ENCODE measurements at regions of chr6 and their contacts with region 1.

Region 1: DNA sequence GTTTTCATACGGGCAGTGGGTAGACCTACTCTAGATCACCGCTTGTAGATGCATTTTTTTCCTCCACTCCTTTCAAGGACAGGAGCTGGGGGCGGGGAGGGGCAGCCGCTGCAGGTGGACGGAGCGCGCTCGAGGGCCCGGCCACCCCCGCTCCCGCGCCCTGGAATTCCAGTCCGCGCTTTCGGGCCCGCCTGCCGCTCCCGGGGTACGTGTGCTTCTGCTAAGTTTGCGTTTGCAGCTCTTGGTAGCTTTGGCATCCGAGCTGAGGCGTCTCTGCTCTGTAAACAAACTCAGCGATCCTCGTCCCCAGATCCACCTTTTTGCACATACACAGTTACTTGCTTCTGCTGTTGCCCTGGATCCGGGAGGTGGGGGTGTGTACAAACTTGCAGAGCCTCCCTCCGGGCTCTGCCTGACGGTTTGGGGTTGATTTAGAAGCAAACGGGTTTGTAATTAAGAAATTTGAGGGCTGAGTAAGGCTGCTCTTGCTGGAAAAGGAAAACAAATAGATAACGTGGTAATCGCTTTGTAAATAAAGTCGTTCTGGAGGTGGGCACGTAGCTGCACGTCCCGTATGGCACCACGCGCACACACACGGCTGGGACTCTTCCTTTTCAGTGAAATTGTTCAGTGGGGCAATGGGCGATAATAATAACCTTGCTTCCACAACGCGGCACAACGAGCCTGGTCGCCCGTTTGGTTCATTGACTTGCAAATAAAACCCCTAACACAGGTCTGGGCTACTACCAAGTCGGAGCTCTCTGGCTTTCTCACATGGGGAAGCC is 976 bp upstream of the CITED2 start:
- DNase-seq: peak; percentile 88 to 96 (median 89)
- ATAC-seq: peak; percentile 74
- H3K4me3 ChIP-seq: peak overlapping the region; percentile 83
- H3K27ac ChIP-seq: peak overlapping the region; percentile 97
- H3K4me1 ChIP-seq: peaks cover 43 to 45% of the 10 kb centered on the region in 2 experiments
- H3K27me3 ChIP-seq: no peaks in the 10 kb centered on the region
- CTCF ChIP-seq: peak in 1 of 3 experiments; percentile 47; a peak in 1 of 6 replicates
- EP300 ChIP-seq: peak; percentile 51
- POLR2A ChIP-seq: peak; percentile 78
- RAD21 ChIP-seq: peak; percentile 65 to 72

Region 2: GRCh38 chr6:138638604-138639003 is 736.8 kb before region 1 on chr6:
- CTCF ChIA-PET with region 1: no interaction called
- POLR2A ChIA-PET with region 1: no interaction called
- in situ Hi-C with region 1: no loop called
- intact Hi-C with region 1: no loop called
- DNase-seq: no peak
- ATAC-seq: no peak
- H3K4me3 ChIP-seq: no peak overlapping the region
- H3K27ac ChIP-seq: no peak overlapping the region
- H3K4me1 ChIP-seq: no peaks in the 10 kb centered on the region
- H3K27me3 ChIP-seq: no peaks in the 10 kb centered on the region
- CTCF ChIP-seq: no peak
- EP300 ChIP-seq: no peak
- POLR2A ChIP-seq: no peak
- RAD21 ChIP-seq: no peak

Region 3: DNA sequence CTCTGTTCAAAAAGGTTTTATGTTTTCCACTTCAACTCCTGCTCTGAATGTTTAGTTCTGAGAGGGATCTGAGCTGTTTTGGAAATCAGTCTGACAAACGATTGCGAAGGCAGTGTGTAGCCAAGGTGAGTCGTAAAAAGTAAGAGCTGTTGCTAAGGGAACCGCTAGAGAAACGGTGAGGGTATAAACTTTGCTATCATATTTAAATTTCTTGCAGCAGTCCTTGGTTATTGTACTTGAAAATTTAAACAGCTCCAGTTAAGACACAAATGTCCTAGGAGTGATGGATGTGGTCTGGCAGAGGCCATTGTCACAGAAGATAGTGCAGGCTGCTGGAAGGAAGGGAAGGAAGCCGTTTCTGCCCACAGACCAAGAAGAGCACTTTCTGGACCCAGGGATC is 63.9 kb after region 1 on chr6:
- CTCF ChIA-PET with region 1: no interaction called
- POLR2A ChIA-PET with region 1: interaction called, 11 read pairs
- in situ Hi-C with region 1: no loop called
- intact Hi-C with region 1: no loop called
- DNase-seq: no peak
- ATAC-seq: peak; percentile 28; the same call in 2 of the 3 replicates
- H3K4me3 ChIP-seq: no peak overlapping the region
- H3K27ac ChIP-seq: no peak overlapping the region
- H3K4me1 ChIP-seq: peaks cover 15 to 36% of the 10 kb centered on the region in 2 experiments
- H3K27me3 ChIP-seq: no peaks in the 10 kb centered on the region
- CTCF ChIP-seq: no peak
- EP300 ChIP-seq: peak; percentile 12; the same call in 1 of the 2 replicates
- POLR2A ChIP-seq: no peak
- RAD21 ChIP-seq: no peak

Region 4: DNA sequence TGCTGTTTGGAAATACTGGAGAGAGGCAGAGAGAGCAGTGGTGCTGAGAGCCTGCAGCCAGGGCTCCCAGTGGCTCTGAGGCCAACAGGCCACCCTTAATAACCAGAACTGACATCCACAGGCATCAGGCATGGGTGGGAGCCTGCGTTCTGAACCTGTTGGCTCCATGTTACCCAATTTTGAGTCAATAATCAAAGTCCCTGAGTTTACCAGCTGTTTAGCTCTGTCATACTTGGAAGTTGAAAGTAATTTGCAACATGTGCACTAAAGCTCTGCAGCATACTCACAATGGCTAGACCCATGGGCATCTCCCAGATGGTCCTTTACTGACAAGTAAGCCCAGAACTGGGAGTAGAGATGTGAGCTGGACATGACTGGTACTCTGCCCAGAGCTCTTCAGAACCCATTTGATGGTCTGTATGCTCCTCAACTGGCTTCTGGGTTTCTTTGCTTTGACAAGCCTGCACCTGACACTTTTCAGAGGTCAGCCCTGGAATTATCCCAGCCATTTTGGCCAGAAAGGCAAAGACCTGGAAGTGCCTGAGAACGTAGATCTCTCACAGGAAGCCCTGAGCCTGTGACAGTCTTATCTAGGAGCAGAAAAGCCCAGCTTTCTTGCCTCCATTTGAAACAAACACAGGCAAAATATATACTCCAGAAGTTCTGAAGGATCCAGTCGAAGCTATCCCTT is 121.4 kb after region 1 on chr6:
- CTCF ChIA-PET with region 1: no interaction called
- POLR2A ChIA-PET with region 1: interaction called, 17 read pairs
- in situ Hi-C with region 1: no loop called
- intact Hi-C with region 1: loop called (anchors 2 kb)
- DNase-seq: peak in 2 of 4 experiments; percentile 46 to 70
- ATAC-seq: peak; percentile 75
- H3K4me3 ChIP-seq: peak overlapping the region; percentile 4; the same call in 1 of the 2 replicates
- H3K27ac ChIP-seq: peak overlapping the region; percentile 57
- H3K4me1 ChIP-seq: peaks cover 19 to 22% of the 10 kb centered on the region in 2 experiments
- H3K27me3 ChIP-seq: no peaks in the 10 kb centered on the region
- CTCF ChIP-seq: no peak
- EP300 ChIP-seq: no peak
- POLR2A ChIP-seq: no peak
- RAD21 ChIP-seq: no peak

Region 5: DNA sequence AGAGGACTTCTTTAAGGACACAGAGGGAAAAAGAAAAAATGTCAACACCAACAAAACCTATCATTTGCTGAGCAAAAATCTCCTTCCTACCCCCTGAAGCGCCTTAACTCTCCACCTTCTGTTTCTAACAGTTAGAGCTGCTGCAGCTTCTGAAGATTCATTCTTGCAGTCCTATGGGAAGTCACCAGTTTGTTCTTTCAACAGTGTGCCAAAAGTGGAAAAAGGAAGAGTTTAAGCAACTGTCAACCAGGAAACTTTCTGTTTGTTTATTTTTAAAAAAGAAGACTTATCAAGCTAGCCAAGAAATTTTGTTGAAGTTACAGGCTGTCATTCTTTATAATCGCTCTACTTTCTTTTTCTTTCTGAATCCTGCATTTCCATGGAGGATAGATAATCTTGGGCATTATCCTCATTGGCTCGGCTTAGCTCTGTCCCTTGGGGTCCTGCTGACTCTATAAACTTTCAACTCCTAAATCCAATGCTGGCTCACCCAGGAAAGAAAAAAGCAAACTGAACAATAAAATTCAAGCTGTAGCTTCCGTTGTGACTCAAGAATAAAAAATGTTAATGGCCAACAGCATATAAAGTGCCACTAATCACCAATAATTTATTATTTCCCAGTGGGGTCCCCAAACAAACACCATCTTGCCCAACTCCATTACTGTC is 171.8 kb after region 1 on chr6:
- CTCF ChIA-PET with region 1: no interaction called
- POLR2A ChIA-PET with region 1: interaction called, 12 read pairs
- in situ Hi-C with region 1: no loop called
- intact Hi-C with region 1: no loop called
- DNase-seq: no peak
- ATAC-seq: peak; percentile 54
- H3K4me3 ChIP-seq: no peak overlapping the region
- H3K27ac ChIP-seq: peak overlapping the region; percentile 31; the same call in 2 of the 3 replicates
- H3K4me1 ChIP-seq: peaks cover 3 to 28% of the 10 kb centered on the region in 2 experiments; a peak in 3 of 5 replicates
- H3K27me3 ChIP-seq: no peaks in the 10 kb centered on the region
- CTCF ChIP-seq: no peak
- EP300 ChIP-seq: no peak
- POLR2A ChIP-seq: no peak
- RAD21 ChIP-seq: no peak

Region 6: GRCh38 chr6:139644821-139645220 is 269.4 kb after region 1 on chr6:
- CTCF ChIA-PET with region 1: no interaction called
- POLR2A ChIA-PET with region 1: interaction called, 6 read pairs
- in situ Hi-C with region 1: no loop called
- intact Hi-C with region 1: loop called (anchors 1 kb)
- DNase-seq: no peak
- ATAC-seq: no peak
- H3K4me3 ChIP-seq: no peak overlapping the region
- H3K27ac ChIP-seq: no peak overlapping the region
- H3K4me1 ChIP-seq: peaks cover 19 to 48% of the 10 kb centered on the region in 2 experiments
- H3K27me3 ChIP-seq: no peaks in the 10 kb centered on the region
- CTCF ChIP-seq: no peak
- EP300 ChIP-seq: no peak
- POLR2A ChIP-seq: no peak
- RAD21 ChIP-seq: no peak

Region 7: GRCh38 chr6:139881728-139882211 is 506.3 kb after region 1 on chr6:
- CTCF ChIA-PET with region 1: interaction called, 5 read pairs
- POLR2A ChIA-PET with region 1: interaction called, 6 read pairs
- in situ Hi-C with region 1: no loop called
- intact Hi-C with region 1: loop called (anchors 5 kb)
- DNase-seq: peak; percentile 27 to 43 (median 34)
- ATAC-seq: peak; percentile 85
- H3K4me3 ChIP-seq: no peak overlapping the region
- H3K27ac ChIP-seq: no peak overlapping the region
- H3K4me1 ChIP-seq: peaks cover 0 to 18% of the 10 kb centered on the region in 2 experiments; a peak in 4 of 5 replicates
- H3K27me3 ChIP-seq: no peaks in the 10 kb centered on the region
- CTCF ChIP-seq: peak; percentile 44 to 52 (median 48); a peak in 4 of 6 replicates
- EP300 ChIP-seq: no peak
- POLR2A ChIP-seq: no peak
- RAD21 ChIP-seq: peak; percentile 39 to 61

Measured in K562 (cell line).